Motor neuron (in vitro differentiated cells): ENCODE measurements at regions of chr22 and their contacts with region 1.

Region 1: GRCh38 chr22:49297871-49298721 is 529.6 kb downstream of the BRD1 start:
- ATAC-seq: no peak
- H3K4me3 ChIP-seq: no peak overlapping the region
- H3K27ac ChIP-seq: no peak overlapping the region
- H3K4me1 ChIP-seq: no peaks in the 10 kb centered on the region

Region 2: GRCh38 chr22:48943567-48944432 is 354.3 kb before region 1 on chr22:
- in situ Hi-C with region 1: loop called in 1 of 9 experiments (anchors 25 kb)
- ATAC-seq: peak in 3 of 8 experiments; percentile 73 to 97 (median 88)
- H3K4me3 ChIP-seq: no peak overlapping the region
- H3K27ac ChIP-seq: no peak overlapping the region
- H3K4me1 ChIP-seq: no peaks in the 10 kb centered on the region

Region 3: DNA sequence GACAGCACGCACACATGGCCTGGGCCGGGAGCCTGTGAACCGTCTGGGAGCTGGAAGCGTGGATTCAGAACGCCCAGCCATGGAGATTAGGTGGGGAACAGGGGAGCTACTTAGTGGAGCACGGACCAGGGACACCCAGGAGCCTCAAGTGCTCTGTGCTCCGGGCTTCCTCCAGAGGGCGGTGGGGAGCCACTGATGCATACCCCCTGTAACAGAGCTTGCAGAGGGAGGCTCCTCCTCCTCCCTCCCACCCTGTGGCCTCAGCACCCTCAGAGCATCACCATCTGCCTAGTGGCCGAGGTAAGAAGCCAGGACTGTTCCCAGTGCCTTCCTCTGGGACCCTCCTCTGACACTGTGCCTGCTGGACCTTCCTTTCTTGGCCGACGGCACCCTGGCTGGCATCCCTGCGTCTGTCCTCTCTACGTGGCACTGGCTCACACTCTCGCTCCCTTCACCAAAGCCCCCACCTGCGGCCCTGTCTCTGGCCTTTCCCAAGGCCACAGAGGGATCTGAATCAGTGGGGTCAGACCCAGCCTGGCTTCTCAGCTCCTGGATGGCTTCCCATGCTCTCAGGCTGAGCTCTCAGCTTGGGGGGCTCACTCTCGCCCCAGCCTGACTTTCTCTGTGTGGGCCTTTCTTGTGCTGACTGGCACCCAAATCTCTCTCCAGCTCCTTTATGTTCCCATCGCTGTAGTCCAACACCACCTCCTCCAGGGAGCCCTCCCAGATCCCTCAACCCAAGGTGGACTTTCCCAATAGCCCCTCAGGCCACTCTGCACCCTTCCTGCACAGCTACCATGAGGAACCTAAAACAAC is 251.3 kb before region 1 on chr22:
- in situ Hi-C with region 1: loop called in 2 of 9 experiments (anchors 25 kb)
- ATAC-seq: peak in 5 of 8 experiments; percentile 59 to 96 (median 73)
- H3K4me3 ChIP-seq: no peak overlapping the region
- H3K27ac ChIP-seq: no peak overlapping the region
- H3K4me1 ChIP-seq: no peaks in the 10 kb centered on the region

Region 4: DNA sequence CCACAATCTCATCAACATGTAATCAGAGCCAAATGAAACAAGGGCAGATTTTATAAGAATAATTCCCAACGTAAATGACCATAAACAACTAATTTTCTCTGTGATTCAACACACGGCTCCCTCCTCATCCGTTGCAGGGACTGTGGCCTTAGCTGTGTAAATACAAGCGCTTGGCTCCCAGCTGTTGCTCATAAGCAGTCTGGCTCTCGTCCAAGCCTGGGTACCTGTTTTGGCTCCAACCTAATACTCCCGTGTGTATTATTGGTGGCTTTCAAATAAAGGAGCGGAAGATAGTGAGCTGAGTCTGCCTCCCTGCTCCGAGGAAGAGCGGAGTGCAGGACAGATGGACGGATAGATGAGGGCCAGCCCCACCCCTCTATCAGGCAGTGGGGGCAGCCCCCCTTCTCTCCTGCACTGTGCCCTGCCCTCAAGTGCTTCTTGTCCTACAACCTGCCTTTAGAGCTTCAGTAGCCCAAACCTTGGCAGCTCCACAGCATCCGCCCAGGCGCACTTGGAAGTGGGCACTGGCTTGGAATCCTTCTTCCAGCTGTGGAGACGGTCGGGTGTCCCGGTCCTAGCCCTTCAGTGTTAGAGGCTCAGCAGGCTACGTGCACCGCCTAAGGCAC is 141.3 kb before region 1 on chr22:
- in situ Hi-C with region 1: loop called in 1 of 9 experiments (anchors 25 kb)
- ATAC-seq: no peak
- H3K4me3 ChIP-seq: no peak overlapping the region
- H3K27ac ChIP-seq: no peak overlapping the region
- H3K4me1 ChIP-seq: no peaks in the 10 kb centered on the region